ENCODE measurements at regions of chr5 and their contacts with region 1.

Region 1: GRCh38 chr5:77925503-77925902 is 149.4 kb upstream of the TBCA start:
- DNase-seq: no peak
- H3K4me3 Mint-ChIP-seq: peak overlapping the region; percentile 11
- H3K27ac Mint-ChIP-seq: peak overlapping the region; percentile 75
- H3K4me1 Mint-ChIP-seq: peaks cover 14% of the 10 kb centered on the region
- H3K27me3 Mint-ChIP-seq: peaks cover 8% of the 10 kb centered on the region

Region 2: GRCh38 chr5:75964008-75964407 is 1961.5 kb before region 1 on chr5:
- CTCF ChIA-PET with region 1: no interaction called
- intact Hi-C with region 1: no loop called
- DNase-seq: no peak
- H3K4me3 Mint-ChIP-seq: no peak overlapping the region
- H3K27ac Mint-ChIP-seq: no peak overlapping the region
- H3K4me1 Mint-ChIP-seq: no peaks in the 10 kb centered on the region
- H3K27me3 Mint-ChIP-seq: peaks cover 14% of the 10 kb centered on the region

Region 3: GRCh38 chr5:77599679-77600078 is 325.8 kb before region 1 on chr5:
- CTCF ChIA-PET with region 1: no interaction called
- intact Hi-C with region 1: no loop called
- DNase-seq: no peak
- H3K4me3 Mint-ChIP-seq: no peak overlapping the region
- H3K27ac Mint-ChIP-seq: no peak overlapping the region
- H3K4me1 Mint-ChIP-seq: no peaks in the 10 kb centered on the region
- H3K27me3 Mint-ChIP-seq: peaks cover 29% of the 10 kb centered on the region

Region 4: GRCh38 chr5:77882670-77883257 is 42.7 kb before region 1 on chr5:
- CTCF ChIA-PET with region 1: no interaction called
- intact Hi-C with region 1: loop called (anchors 1 kb)
- DNase-seq: peak; percentile 68
- H3K4me3 Mint-ChIP-seq: no peak overlapping the region
- H3K27ac Mint-ChIP-seq: peak overlapping the region; percentile 88
- H3K4me1 Mint-ChIP-seq: peaks cover 29% of the 10 kb centered on the region
- H3K27me3 Mint-ChIP-seq: peaks cover 11% of the 10 kb centered on the region